Common myeloid progenitor, CD34-positive (primary cell): ENCODE measurements at regions of chr1 and their contacts with region 1.

Region 1: GRCh38 chr1:235513495-235514366 is 9.5 kb upstream of the B3GALNT2 start:
- DNase-seq: peak; percentile 74 to 85 (median 77)
- H3K4me3 ChIP-seq: no peak overlapping the region
- H3K27ac ChIP-seq: no peak overlapping the region
- H3K4me1 ChIP-seq: no peaks in the 10 kb centered on the region
- H3K27me3 ChIP-seq: peaks cover 0 to 4% (median 0%) of the 10 kb centered on the region in 5 experiments

Region 2: DNA sequence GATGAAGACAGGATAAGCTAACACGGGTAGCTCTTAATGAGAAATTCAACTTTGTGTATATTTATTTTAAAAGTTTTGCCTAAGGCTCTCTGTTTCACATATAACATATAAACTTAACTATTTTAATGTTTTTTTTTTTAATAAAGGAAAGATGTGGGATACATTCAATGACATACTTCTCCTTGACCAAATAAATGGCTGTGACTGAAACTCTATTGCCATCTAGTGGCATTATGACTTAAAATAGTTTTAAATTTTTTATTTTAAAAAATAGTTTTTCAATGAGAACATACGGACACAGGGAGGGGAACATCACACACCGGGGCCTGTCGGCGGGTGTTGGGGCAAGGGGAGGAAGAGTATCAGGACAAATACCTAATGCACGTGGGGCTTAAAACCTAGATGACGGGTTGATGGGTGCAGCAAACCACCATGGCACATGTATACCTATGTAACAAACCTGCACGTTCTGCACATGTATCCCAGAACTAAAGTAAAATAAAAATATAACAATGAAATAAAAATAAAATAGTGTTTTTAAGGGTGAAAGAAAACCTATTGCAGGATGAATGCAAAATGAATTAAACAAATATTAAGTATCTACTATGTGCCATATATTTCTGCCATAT is 269.5 kb after region 1 on chr1:
- CTCF ChIA-PET with region 1: interaction called, 15 read pairs
- POLR2A ChIA-PET with region 1: no interaction called
- DNase-seq: peak; percentile 36 to 51 (median 44)
- H3K4me3 ChIP-seq: no peak overlapping the region
- H3K27ac ChIP-seq: no peak overlapping the region
- H3K4me1 ChIP-seq: no peaks in the 10 kb centered on the region
- H3K27me3 ChIP-seq: no peaks in the 10 kb centered on the region